ENCODE measurements at regions of chr10 and their contacts with region 1.

Region 1: GRCh38 chr10:66747451-66747850 is 178.4 kb upstream of the LRRTM3 start:
- DNase-seq: no peak
- H3K4me3 ChIP-seq: no peak overlapping the region
- H3K27ac ChIP-seq: no peak overlapping the region
- H3K4me1 ChIP-seq: no peaks in the 10 kb centered on the region
- H3K27me3 ChIP-seq: no peaks in the 10 kb centered on the region
- CTCF ChIP-seq: no peak

Region 2: DNA sequence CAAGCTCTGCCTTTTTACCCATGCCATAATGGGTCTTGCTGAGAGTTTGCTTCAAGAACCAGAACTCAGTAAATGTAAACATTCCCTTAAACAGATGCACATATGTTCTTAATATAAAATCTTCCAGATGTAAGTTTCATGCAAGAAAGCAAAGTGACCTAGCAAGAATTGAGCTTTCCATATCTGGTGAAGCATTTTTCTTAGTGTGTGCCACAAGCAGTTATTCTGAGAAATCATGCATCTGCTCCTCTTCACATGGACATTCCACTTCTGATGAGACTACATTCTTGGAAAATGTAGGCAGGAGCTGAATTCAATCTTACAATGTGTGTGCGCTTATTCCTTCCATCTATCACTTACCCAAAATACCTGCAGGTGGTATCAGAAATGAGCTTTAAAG is 49.4 kb before region 1 on chr10:
- intact Hi-C with region 1: loop called (anchors 5 kb)
- DNase-seq: no peak
- H3K4me3 ChIP-seq: no peak overlapping the region
- H3K27ac ChIP-seq: no peak overlapping the region
- H3K4me1 ChIP-seq: no peaks in the 10 kb centered on the region
- H3K27me3 ChIP-seq: no peaks in the 10 kb centered on the region
- CTCF ChIP-seq: no peak

Measured in tibial artery (tissue), 4 donors.